ENCODE measurements at regions of chr9 and their contacts with region 1.

Region 1: GRCh38 chr9:128275996-128276573 is at the starts of genes GOLGA2 and SWI5:
- DNase-seq: peak; percentile 100
- ATAC-seq: peak; percentile 93
- H3K4me3 ChIP-seq: peak within 1 kb of the TSS; percentile 61 to 99 (median 87)
- H3K4me3 Mint-ChIP-seq: peak within 1 kb of the TSS; percentile 96
- H3K27ac ChIP-seq: peak within 1 kb of the TSS; percentile 81 to 92
- H3K27ac Mint-ChIP-seq: peak within 1 kb of the TSS; percentile 97
- H3K4me1 ChIP-seq: peaks cover 14 to 20% of the 10 kb centered on the region in 2 donors
- H3K4me1 Mint-ChIP-seq: peaks cover 23% of the 10 kb centered on the region
- H3K27me3 ChIP-seq: no peaks in the 10 kb centered on the region
- H3K27me3 Mint-ChIP-seq: no peaks in the 10 kb centered on the region
- CTCF ChIP-seq: no peak
- total RNA-seq, gene GOLGA2: 76.3 and 87.3 TPM in 2 replicates
- total RNA-seq, gene SWI5: 8.6 and 13.3 TPM in 2 replicates

Region 2: DNA sequence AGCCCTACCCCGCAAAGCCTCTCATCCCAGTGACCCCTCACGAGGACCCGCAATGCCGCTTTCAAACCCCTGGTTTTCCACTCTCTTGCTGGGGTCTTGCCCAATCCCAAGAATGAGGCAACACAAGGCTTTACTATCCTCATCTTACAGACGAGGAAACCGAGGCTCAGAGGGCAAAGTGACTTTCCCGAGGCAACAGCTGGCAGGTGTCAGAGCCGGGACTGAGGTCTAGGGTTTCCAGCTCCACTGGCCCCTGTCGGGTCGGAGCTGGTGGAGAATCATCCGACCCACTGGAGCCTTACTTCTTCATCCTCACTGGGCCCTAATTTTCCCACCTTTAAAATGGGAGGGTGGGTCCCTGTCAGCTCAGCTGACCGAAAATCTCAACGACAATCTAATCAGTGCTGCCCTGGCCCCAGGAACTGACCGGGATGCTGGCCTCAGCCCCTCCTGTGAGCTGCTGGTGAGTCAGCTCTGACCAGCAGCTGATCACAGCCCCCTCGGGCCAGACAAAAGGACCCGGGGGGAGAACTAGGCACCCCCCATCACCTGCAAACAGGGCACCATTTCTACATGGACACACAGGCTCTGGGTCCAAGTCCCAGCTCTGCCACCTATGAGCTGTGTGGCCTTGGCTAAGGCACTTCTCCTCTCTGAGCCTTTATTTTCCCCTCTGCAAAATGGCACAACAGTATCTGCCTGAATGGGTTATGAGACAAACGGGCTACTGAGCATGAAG is 736.7 kb before region 1 on chr9:
- CTCF ChIA-PET with region 1: no interaction called
- POLR2A ChIA-PET with region 1: interaction called, 11 read pairs
- intact Hi-C with region 1: no loop called
- DNase-seq: no peak
- ATAC-seq: no peak
- H3K4me3 ChIP-seq: no peak overlapping the region
- H3K4me3 Mint-ChIP-seq: no peak overlapping the region
- H3K27ac ChIP-seq: no peak overlapping the region
- H3K27ac Mint-ChIP-seq: no peak overlapping the region
- H3K4me1 ChIP-seq: no peaks in the 10 kb centered on the region
- H3K4me1 Mint-ChIP-seq: no peaks in the 10 kb centered on the region
- H3K27me3 ChIP-seq: no peaks in the 10 kb centered on the region
- H3K27me3 Mint-ChIP-seq: peaks cover 6% of the 10 kb centered on the region
- CTCF ChIP-seq: no peak

Region 3: GRCh38 chr9:128370826-128371621 is 94.9 kb after region 1 on chr9 and contains the start of gene URM1:
- CTCF ChIA-PET with region 1: interaction called, 4 read pairs
- POLR2A ChIA-PET with region 1: interaction called, 3 read pairs
- intact Hi-C with region 1: loop called (anchors 2 kb)
- DNase-seq: peak; percentile 96
- ATAC-seq: peak; percentile 94
- H3K4me3 ChIP-seq: peak within 1 kb of the TSS; percentile 86 to 98 (median 90)
- H3K4me3 Mint-ChIP-seq: peak within 1 kb of the TSS; percentile 95
- H3K27ac ChIP-seq: peak within 1 kb of the TSS; percentile 83 to 96
- H3K27ac Mint-ChIP-seq: peak within 1 kb of the TSS; percentile 96
- H3K4me1 ChIP-seq: peaks cover 15 to 23% of the 10 kb centered on the region in 2 donors
- H3K4me1 Mint-ChIP-seq: peaks cover 30% of the 10 kb centered on the region
- H3K27me3 ChIP-seq: no peaks in the 10 kb centered on the region
- H3K27me3 Mint-ChIP-seq: no peaks in the 10 kb centered on the region
- CTCF ChIP-seq: no peak
- total RNA-seq, gene URM1: 35.6 and 43.8 TPM in 2 replicates